ENCODE measurements at regions of chr17 and their contacts with region 1.

Region 1: DNA sequence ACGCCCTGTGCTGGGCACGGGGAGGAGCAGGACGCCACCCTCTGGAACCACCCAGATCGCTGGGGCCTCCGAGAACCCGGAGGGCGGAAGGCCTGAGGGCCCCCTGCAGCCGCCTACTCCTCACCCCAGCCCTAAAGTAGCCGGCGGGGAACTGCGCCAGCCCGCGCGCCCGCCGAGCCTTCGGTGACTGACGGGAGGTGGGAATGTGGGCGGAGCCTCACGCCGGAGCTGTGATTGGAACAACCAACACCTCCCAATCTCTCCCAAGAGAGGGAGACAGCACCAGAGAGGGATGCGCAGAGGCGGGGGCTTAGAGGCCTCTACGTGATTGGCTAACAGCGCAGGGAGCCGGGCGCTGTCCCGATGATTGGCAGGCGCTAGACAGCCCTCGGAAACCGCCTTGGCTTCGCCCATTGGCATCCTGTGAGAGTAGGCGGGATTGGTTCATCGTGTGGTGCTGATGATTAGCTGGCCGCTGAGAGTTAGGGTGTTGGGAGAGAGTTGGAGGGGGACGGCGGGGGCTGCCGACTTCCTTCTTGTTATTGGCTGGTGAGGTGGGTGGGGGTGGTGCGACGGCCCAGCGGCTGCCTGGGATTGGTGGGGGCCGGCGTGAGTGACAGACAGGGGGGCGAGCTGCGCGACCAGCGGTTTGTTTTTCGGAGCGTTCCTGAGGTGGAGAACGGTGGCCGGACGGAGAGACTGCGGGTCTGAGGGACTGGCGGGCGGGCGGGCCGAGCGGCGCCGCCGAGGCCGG is at the start of gene MAP3K3:
- DNase-seq: peak; percentile 99 to 100
- H3K4me3 ChIP-seq: peak within 1 kb of the TSS; percentile 95
- H3K4me3 Mint-ChIP-seq: peak within 1 kb of the TSS; percentile 94
- H3K27ac Mint-ChIP-seq: peak within 1 kb of the TSS; percentile 78
- H3K4me1 ChIP-seq: no peaks in the 10 kb centered on the region; the same call in 1 of the 2 replicates
- H3K4me1 Mint-ChIP-seq: peaks cover 16% of the 10 kb centered on the region
- H3K27me3 ChIP-seq: no peaks in the 10 kb centered on the region
- H3K27me3 Mint-ChIP-seq: peaks cover 11% of the 10 kb centered on the region
- CTCF ChIP-seq: no peak
- total RNA-seq, gene MAP3K3: 15.3 and 16.2 TPM in 2 replicates

Region 2: DNA sequence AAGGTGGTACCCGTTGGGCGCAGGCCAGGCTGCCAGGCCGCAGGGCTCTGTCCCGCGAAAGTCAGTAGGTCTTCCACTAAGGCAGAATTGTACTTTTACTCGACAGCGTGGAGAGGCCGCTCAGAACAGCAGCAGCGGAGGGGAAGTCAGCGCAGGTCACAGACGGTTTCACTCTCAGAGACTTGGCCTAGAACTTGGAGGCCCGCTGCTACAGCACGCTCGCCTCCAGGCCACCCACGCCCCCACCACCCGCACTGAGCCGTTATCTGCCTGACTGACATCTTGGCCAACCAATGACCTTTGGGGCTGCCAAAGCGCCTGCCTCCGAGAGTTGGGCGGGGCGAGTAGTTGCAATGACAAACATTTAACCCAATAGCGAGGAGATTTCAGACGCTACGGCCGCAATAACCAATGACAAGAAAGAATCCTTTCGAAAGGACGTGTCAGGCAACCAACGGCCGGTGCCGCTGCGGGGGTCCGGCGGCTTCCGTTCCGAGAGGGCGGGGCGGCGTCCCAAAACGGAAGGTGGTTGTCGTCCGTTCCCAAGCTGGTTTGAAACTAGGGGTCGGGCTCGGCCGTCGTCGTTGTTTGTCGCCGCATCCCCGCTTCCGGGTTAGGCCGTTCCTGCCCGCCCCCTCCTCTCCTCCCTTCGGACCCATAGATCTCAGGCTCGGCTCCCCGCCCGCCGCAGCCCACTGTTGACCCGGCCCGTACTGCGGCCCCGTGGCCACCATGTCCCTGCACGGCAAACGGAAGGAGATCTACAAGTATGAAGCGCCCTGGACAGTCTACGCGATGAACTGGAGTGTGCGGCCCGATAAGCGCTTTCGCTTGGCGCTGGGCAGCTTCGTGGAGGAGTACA is 71.8 kb before region 1 on chr17 and contains the start of gene DCAF7:
- CTCF ChIA-PET with region 1: interaction called, 3 read pairs
- POLR2A ChIA-PET with region 1: interaction called, 11 read pairs
- intact Hi-C with region 1: loop called (anchors 1 kb)
- DNase-seq: peak; percentile 99 to 100
- H3K4me3 ChIP-seq: peak within 1 kb of the TSS; percentile 88
- H3K4me3 Mint-ChIP-seq: peak within 1 kb of the TSS; percentile 98
- H3K27ac Mint-ChIP-seq: peak within 1 kb of the TSS; percentile 96
- H3K4me1 ChIP-seq: no peaks in the 10 kb centered on the region
- H3K4me1 Mint-ChIP-seq: peaks cover 4% of the 10 kb centered on the region
- H3K27me3 ChIP-seq: no peaks in the 10 kb centered on the region
- H3K27me3 Mint-ChIP-seq: no peaks in the 10 kb centered on the region
- CTCF ChIP-seq: no peak
- total RNA-seq, gene DCAF7: 91.2 and 94.5 TPM in 2 replicates

Region 3: GRCh38 chr17:63587770-63588169 is 34.2 kb before region 1 on chr17:
- CTCF ChIA-PET with region 1: no interaction called
- POLR2A ChIA-PET with region 1: no interaction called
- intact Hi-C with region 1: no loop called
- DNase-seq: no peak
- H3K4me3 ChIP-seq: no peak overlapping the region
- H3K4me3 Mint-ChIP-seq: no peak overlapping the region
- H3K27ac Mint-ChIP-seq: no peak overlapping the region
- H3K4me1 ChIP-seq: no peaks in the 10 kb centered on the region
- H3K4me1 Mint-ChIP-seq: no peaks in the 10 kb centered on the region
- H3K27me3 ChIP-seq: no peaks in the 10 kb centered on the region
- H3K27me3 Mint-ChIP-seq: no peaks in the 10 kb centered on the region
- CTCF ChIP-seq: no peak

Region 4: GRCh38 chr17:63611354-63611753 is 10.6 kb before region 1 on chr17:
- CTCF ChIA-PET with region 1: interaction called, 22 read pairs
- POLR2A ChIA-PET with region 1: interaction called, 3 read pairs
- intact Hi-C with region 1: no loop called
- DNase-seq: no peak
- H3K4me3 ChIP-seq: no peak overlapping the region
- H3K4me3 Mint-ChIP-seq: no peak overlapping the region
- H3K27ac Mint-ChIP-seq: no peak overlapping the region
- H3K4me1 ChIP-seq: no peaks in the 10 kb centered on the region
- H3K4me1 Mint-ChIP-seq: no peaks in the 10 kb centered on the region
- H3K27me3 ChIP-seq: no peaks in the 10 kb centered on the region
- H3K27me3 Mint-ChIP-seq: peaks cover 3% of the 10 kb centered on the region
- CTCF ChIP-seq: no peak

Region 5: GRCh38 chr17:63653050-63653449 is 31.1 kb after region 1 on chr17:
- CTCF ChIA-PET with region 1: no interaction called
- POLR2A ChIA-PET with region 1: no interaction called
- intact Hi-C with region 1: no loop called
- DNase-seq: no peak
- H3K4me3 ChIP-seq: no peak overlapping the region
- H3K4me3 Mint-ChIP-seq: no peak overlapping the region
- H3K27ac Mint-ChIP-seq: no peak overlapping the region
- H3K4me1 ChIP-seq: no peaks in the 10 kb centered on the region
- H3K4me1 Mint-ChIP-seq: no peaks in the 10 kb centered on the region
- H3K27me3 ChIP-seq: no peaks in the 10 kb centered on the region
- H3K27me3 Mint-ChIP-seq: no peaks in the 10 kb centered on the region
- CTCF ChIP-seq: no peak

Region 6: GRCh38 chr17:63697341-63698286 is 75.7 kb after region 1 on chr17:
- CTCF ChIA-PET with region 1: no interaction called
- POLR2A ChIA-PET with region 1: no interaction called
- intact Hi-C with region 1: loop called (anchors 5 kb)
- DNase-seq: peak in 1 of 2 experiments; percentile 69
- H3K4me3 ChIP-seq: no peak overlapping the region
- H3K4me3 Mint-ChIP-seq: peak overlapping the region; percentile 65
- H3K27ac Mint-ChIP-seq: no peak overlapping the region
- H3K4me1 ChIP-seq: no peaks in the 10 kb centered on the region
- H3K4me1 Mint-ChIP-seq: no peaks in the 10 kb centered on the region
- H3K27me3 ChIP-seq: no peaks in the 10 kb centered on the region
- H3K27me3 Mint-ChIP-seq: no peaks in the 10 kb centered on the region
- CTCF ChIP-seq: peak; percentile 29 to 56

Region 7: DNA sequence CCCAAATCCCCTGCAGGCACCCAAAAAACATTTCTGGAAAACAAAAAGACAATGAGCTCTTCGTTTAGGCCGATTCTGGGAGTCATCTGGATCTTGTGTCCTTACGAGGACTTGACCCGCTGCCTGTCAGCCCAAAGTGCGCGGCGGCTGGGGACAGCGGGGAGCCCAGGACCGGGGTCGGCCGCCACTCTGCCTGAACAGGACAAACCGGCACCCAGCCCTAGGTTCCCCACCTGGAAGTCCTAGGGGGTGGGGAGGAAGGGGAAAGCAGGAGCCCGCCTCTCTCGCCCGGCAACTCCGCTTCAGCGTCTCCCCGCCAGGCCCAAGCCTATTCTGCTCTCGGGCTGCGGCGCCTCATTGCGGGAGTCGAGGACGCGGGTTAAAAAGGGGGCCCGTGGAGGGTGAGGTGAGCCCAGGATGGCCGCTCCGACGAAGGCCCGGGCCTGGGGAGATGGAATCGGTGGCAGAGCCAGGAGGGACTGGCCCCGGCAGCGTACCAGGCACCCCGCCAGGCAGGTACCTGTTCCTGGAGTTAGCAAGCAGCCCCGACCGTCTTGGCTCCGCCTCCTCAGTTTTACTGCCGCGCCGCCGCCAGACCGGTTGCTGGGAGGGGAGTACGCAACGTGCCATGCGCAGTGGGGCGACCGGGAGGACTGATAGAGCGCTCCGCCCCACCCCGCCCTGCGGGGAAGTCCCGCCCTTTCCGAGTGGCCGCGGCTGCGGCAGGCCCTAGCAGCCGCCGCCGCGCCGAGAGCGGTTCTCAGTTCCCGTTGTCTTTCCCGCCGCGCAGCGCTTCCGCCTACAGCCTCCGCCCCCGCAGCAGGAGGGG is 119.5 kb after region 1 on chr17 and contains the start of gene STRADA:
- CTCF ChIA-PET with region 1: interaction called, 3 read pairs
- POLR2A ChIA-PET with region 1: interaction called, 6 read pairs
- intact Hi-C with region 1: loop called (anchors 1 kb)
- DNase-seq: peak; percentile 100
- H3K4me3 ChIP-seq: peak within 1 kb of the TSS; percentile 83
- H3K4me3 Mint-ChIP-seq: peak within 1 kb of the TSS; percentile 96
- H3K27ac Mint-ChIP-seq: peak within 1 kb of the TSS; percentile 96
- H3K4me1 ChIP-seq: peaks cover 9% of the 10 kb centered on the region
- H3K4me1 Mint-ChIP-seq: peaks cover 6% of the 10 kb centered on the region
- H3K27me3 ChIP-seq: no peaks in the 10 kb centered on the region
- H3K27me3 Mint-ChIP-seq: no peaks in the 10 kb centered on the region
- CTCF ChIP-seq: no peak
- total RNA-seq, gene STRADA: 23.4 and 24.7 TPM in 2 replicates

Region 8: DNA sequence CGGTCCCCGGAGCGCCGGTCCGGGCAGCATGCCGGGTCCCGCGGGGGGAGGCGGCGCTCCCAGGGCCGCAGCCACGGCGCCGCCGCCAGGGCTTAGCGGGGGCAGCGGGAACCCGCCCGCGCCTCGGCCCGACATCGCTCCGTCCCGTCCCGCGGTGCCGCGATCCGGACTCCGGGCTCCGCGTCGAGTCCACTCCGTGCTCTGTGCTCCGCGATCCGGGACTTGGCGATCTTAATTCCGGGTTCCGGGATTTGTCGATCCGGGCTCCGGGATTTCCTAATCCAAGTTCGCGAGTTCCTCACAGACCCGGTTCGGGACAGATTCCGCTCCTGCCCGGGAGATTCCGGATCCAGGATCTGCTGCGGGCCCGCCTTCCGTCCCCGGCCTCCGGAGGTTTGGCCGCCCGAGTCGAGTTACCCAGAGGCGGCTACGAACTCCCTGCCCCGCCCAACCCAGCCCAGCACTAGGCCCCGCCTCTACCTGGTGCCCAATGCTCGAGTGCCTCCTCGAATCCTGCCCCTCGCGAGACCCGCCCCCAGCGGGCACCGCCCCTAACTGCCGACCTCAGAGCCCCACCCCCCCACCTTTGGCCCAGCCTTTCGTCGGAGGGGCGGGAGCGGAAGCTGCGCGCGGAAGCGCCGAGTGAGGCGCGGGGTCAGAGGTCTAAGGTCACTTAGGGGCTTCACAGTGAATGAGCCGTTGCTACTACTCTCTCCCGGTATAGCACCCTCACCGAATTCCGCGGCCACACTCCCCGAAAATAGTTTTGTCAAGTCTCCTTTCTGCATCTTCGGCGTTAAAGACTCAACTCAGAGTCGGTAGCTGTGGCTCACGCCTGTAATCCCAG is 220.8 kb after region 1 on chr17 and contains the start of gene SMARCD2:
- CTCF ChIA-PET with region 1: no interaction called
- POLR2A ChIA-PET with region 1: no interaction called
- intact Hi-C with region 1: loop called (anchors 10 kb)
- DNase-seq: peak; percentile 99
- H3K4me3 ChIP-seq: peak within 1 kb of the TSS; percentile 95
- H3K4me3 Mint-ChIP-seq: peak within 1 kb of the TSS; percentile 99
- H3K27ac Mint-ChIP-seq: peak within 1 kb of the TSS; percentile 87
- H3K4me1 ChIP-seq: peaks cover 15% of the 10 kb centered on the region
- H3K4me1 Mint-ChIP-seq: peaks cover 28% of the 10 kb centered on the region
- H3K27me3 ChIP-seq: no peaks in the 10 kb centered on the region
- H3K27me3 Mint-ChIP-seq: no peaks in the 10 kb centered on the region
- CTCF ChIP-seq: no peak
- total RNA-seq, gene SMARCD2: 134 TPM in 2 replicates